ENCODE measurements at regions of chr6 and their contacts with region 1.

Region 1: DNA sequence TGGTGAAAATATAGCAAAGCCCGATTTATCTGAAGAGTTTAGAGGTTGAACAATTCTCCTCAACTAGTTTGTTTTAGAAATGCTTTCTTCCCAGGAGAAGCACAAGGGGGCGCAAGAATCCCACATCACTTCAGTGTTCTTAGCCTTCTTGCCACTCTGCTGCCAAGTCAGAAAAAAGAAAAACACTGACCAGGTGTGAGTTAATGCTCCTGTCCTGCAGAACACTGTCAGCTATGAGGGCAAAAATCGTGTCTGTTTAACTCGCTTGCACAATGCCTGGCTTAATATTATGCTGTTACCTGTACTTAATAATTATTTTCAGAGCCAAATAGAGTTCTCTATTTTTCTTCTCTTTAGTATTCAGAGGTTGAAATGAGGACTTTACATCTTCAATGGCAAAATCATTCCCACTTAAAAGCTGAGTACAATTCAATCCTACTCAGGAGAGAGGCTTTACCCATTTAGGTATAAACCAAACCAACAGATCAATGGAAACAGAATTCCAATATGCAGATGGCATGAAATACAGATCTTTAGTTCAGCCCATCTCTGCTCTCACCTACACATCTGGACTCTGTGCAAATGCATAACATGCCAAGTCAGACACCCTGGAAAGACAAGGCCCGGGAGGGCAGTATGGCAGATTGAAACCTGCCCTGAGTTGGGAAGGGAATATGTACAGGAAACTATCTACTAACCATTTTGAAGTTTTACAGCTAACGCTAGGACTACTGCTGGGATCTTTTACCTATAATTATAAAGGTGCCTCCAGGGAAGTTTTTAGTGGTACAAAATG is 71.4 kb upstream of the TULP1 start:
- DNase-seq: peak; percentile 82
- H3K4me3 Mint-ChIP-seq: no peak overlapping the region
- H3K27ac Mint-ChIP-seq: peak overlapping the region; percentile 75
- H3K4me1 Mint-ChIP-seq: peaks cover 40% of the 10 kb centered on the region
- H3K27me3 Mint-ChIP-seq: no peaks in the 10 kb centered on the region
- CTCF ChIP-seq: peak; percentile 65

Region 2: DNA sequence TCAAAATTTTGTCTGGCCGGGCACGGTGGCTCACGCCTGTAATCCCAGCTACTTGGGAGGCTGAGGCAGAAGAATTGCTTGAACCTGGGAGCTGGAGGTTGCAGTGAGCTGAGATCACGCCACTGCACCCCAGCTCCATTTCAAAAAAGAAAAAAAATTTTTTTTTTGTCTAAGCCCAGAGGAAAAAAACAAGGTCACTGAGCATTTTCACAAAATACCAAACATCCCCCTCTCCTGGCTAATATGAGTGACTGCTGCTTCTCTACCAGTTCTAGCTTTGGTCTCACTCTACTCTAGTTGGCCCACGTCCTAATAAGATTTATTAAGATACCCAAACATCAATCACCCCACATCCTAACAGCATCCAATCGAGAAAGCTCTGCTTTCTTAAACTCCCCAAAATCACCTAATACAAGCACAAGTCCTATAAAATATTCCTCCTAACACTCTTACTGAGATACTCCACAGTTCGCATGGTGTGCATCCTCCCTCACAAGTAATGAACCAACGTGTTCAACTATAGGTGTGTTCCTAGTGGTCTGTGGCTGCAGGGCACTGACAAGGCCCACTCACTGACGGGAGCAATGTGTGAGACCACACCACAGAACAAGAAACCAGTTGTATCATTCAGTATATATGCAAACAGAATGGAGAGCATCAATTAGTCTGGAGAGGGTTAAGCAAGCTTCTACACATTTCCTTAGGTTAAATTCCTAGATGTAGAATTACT is 40.4 kb after region 1 on chr6:
- CTCF ChIA-PET with region 1: interaction called, 5 read pairs
- POLR2A ChIA-PET with region 1: interaction called, 4 read pairs
- intact Hi-C with region 1: loop called (anchors 1 kb)
- DNase-seq: no peak
- H3K4me3 Mint-ChIP-seq: no peak overlapping the region
- H3K27ac Mint-ChIP-seq: peak overlapping the region; percentile 61
- H3K4me1 Mint-ChIP-seq: peaks cover 13% of the 10 kb centered on the region
- H3K27me3 Mint-ChIP-seq: no peaks in the 10 kb centered on the region
- CTCF ChIP-seq: no peak

Region 3: GRCh38 chr6:35737413-35738211 is 153.5 kb after region 1 on chr6:
- CTCF ChIA-PET with region 1: interaction called, 56 read pairs
- POLR2A ChIA-PET with region 1: interaction called, 28 read pairs
- intact Hi-C with region 1: loop called (anchors 1 kb)
- DNase-seq: peak; percentile 80
- H3K4me3 Mint-ChIP-seq: no peak overlapping the region
- H3K27ac Mint-ChIP-seq: no peak overlapping the region
- H3K4me1 Mint-ChIP-seq: peaks cover 34% of the 10 kb centered on the region
- H3K27me3 Mint-ChIP-seq: no peaks in the 10 kb centered on the region
- CTCF ChIP-seq: peak; percentile 84